MCF 10A (cell line): ENCODE measurements at regions of chr4 and their contacts with region 1.

Region 1: DNA sequence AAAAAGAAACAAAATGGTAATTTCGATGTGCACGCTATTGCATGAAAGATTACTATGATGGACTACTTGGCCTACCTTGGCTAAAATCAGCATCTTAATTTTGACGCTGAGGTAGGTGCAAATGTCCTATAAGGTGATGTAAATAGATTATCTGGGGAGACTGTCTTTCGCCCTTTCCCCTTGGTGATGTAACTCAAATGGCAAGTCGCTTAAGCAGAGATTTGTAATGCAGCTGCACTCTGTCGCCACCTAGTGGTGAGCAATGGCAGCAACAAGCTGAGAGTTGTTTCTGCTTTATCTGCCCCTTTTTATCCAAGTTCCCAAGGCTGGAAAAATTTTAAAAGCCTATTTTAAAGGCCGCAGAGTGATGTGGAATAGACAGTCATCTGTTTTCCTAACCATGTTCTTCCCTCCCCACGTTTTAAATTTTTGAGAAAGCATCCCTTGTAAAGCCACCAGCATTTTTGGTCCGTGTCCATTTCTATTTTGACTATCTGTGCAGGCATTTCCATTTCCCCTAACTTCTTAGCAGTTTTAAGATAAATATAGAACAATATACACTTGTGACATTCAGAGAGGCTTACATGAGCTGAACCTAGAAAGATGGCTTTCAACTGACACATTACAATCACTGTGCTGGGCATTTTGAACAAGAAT is 62.4 kb upstream of the PDLIM3 start:
- DNase-seq: peak; percentile 77
- H3K4me3 Mint-ChIP-seq: no peak overlapping the region
- H3K27ac Mint-ChIP-seq: no peak overlapping the region
- H3K4me1 Mint-ChIP-seq: no peaks in the 10 kb centered on the region
- H3K27me3 Mint-ChIP-seq: no peaks in the 10 kb centered on the region
- CTCF ChIP-seq: peak; percentile 98

Region 2: GRCh38 chr4:185395956-185396723 is 201.5 kb before region 1 on chr4:
- CTCF ChIA-PET with region 1: interaction called, 5 read pairs
- POLR2A ChIA-PET with region 1: interaction called, 7 read pairs
- intact Hi-C with region 1: loop called (anchors 5 kb)
- DNase-seq: peak; percentile 99
- H3K4me3 Mint-ChIP-seq: peak overlapping the region; percentile 88
- H3K27ac Mint-ChIP-seq: peak overlapping the region; percentile 99
- H3K4me1 Mint-ChIP-seq: peaks cover 7% of the 10 kb centered on the region
- H3K27me3 Mint-ChIP-seq: no peaks in the 10 kb centered on the region
- CTCF ChIP-seq: no peak

Region 3: DNA sequence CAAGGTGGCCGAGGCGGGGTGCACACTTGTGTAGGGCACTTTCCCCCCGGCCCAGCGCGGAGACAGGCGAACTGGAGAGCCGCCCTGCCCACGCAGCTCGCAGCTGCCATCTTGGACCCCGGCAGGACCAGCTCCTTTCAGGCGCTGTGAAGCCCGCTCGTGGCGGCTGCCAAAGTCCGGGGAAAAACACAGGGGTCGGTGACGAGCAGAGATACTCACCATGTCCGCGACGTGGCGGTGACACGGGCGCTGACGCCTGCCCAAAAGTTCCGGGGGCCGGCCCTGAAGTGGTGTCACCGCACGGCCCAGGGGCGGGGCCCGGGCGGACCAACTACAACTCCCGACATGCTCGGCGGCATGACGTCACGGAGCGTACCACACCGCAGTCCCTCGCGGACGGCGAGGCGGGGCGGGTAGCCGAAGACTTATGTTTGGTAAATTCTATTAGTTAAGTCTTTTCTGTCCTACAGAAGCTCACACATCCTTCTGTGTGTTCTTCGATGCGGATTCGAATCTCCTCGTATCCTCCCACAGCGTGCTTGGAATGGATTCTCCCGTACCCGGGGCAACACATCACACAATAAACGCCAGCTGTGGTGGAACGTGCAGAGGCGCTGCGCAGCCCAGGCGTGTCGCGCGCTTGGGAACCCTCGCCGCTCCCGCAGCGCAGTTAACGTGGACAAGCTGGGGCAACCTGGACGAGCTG is 171.9 kb before region 1 on chr4 and contains the start of gene UFSP2:
- CTCF ChIA-PET with region 1: interaction called, 24 read pairs
- POLR2A ChIA-PET with region 1: interaction called, 4 read pairs
- intact Hi-C with region 1: loop called (anchors 1 kb)
- DNase-seq: peak; percentile 89
- H3K4me3 Mint-ChIP-seq: peak within 1 kb of the TSS; percentile 84
- H3K27ac Mint-ChIP-seq: peak within 1 kb of the TSS; percentile 100
- H3K4me1 Mint-ChIP-seq: peaks cover 28% of the 10 kb centered on the region
- H3K27me3 Mint-ChIP-seq: no peaks in the 10 kb centered on the region
- CTCF ChIP-seq: no peak
- total RNA-seq, gene UFSP2: 44.4 and 46.4 TPM in 2 replicates

Region 4: GRCh38 chr4:185471235-185472102 is 126.2 kb before region 1 on chr4 and contains the start of gene CCDC110:
- CTCF ChIA-PET with region 1: interaction called, 19 read pairs
- POLR2A ChIA-PET with region 1: interaction called, 3 read pairs
- intact Hi-C with region 1: loop called (anchors 1 kb)
- DNase-seq: peak; percentile 92
- H3K4me3 Mint-ChIP-seq: peak within 1 kb of the TSS; percentile 80
- H3K27ac Mint-ChIP-seq: no peak within 1 kb of the TSS
- H3K4me1 Mint-ChIP-seq: no peaks in the 10 kb centered on the region
- H3K27me3 Mint-ChIP-seq: peaks cover 43% of the 10 kb centered on the region
- CTCF ChIP-seq: peak; percentile 66
- total RNA-seq, gene CCDC110: 0.47 TPM in 1 of 2 replicates, not detected in the other

Region 5: GRCh38 chr4:185582651-185583400 is 14.8 kb before region 1 on chr4:
- CTCF ChIA-PET with region 1: interaction called, 14 read pairs
- POLR2A ChIA-PET with region 1: no interaction called
- intact Hi-C with region 1: no loop called
- DNase-seq: no peak
- H3K4me3 Mint-ChIP-seq: no peak overlapping the region
- H3K27ac Mint-ChIP-seq: no peak overlapping the region
- H3K4me1 Mint-ChIP-seq: no peaks in the 10 kb centered on the region
- H3K27me3 Mint-ChIP-seq: no peaks in the 10 kb centered on the region
- CTCF ChIP-seq: no peak

Region 6: DNA sequence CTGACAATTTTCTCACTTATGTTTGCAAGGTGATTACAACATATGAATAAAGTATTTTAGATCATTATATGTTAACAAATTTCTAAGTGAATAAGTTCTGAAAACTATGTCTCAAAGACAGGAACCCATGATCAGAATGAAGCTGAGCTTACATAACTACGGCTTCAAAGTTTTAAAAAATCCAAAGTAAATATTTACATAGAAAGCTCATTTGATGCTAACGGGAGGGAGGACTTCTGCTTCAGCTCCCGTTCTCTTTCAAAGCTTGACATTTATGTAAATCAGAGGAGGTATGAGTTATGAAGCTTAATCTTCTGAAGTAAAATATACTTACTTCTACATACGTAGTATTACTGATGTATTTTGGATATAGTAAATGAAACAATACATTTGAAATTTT is 10.5 kb after region 1 on chr4:
- CTCF ChIA-PET with region 1: interaction called, 12 read pairs
- POLR2A ChIA-PET with region 1: no interaction called
- intact Hi-C with region 1: no loop called
- DNase-seq: no peak
- H3K4me3 Mint-ChIP-seq: no peak overlapping the region
- H3K27ac Mint-ChIP-seq: no peak overlapping the region
- H3K4me1 Mint-ChIP-seq: no peaks in the 10 kb centered on the region
- H3K27me3 Mint-ChIP-seq: no peaks in the 10 kb centered on the region
- CTCF ChIP-seq: no peak

Region 7: DNA sequence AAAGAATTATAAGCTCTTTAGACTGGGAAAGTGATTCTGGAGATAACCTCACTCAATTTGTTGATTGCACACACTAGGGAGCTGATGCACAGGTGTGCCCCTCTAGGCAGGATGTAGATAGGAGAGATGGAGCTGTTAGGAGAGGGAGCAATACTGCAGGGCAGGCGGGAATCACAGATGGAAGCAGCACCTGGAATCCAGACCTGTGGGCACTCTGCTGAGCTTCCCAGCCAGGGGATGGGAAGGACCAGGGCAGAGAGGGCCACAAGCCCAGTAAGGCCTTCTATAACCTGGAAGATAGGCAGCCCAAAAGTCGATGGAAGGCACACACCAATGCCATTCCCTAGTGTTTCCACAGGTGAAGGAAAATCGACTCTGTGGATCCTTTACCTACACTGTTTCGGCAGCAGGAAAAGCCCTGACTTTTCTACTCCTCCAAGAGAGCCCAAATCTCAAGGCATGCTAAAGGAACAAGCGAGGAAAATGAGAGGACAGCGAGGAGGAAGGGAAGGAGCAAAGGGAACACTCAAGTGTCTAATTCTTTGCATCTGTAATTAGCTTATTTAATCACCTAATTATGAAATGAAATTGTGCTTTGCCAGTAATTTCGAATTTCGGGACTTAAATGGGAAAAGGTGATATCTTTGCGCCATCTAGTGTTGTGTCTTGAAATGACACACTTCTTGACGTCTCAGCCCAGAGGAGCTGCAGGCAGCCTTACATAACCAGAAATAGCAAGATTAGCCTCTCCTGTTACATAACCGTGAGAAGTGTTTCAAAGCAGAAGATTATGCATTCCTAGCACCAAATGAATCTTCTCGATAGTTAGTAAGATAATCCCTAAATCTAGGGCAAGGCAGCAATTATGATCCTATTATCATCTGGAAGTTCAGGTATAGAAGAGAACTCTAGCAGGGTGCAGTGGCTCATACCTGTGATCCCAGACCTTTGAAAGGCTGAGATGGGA is 440.3 kb after region 1 on chr4:
- CTCF ChIA-PET with region 1: interaction called, 13 read pairs
- POLR2A ChIA-PET with region 1: no interaction called
- intact Hi-C with region 1: loop called (anchors 1 kb)
- DNase-seq: peak; percentile 79
- H3K4me3 Mint-ChIP-seq: no peak overlapping the region
- H3K27ac Mint-ChIP-seq: no peak overlapping the region
- H3K4me1 Mint-ChIP-seq: no peaks in the 10 kb centered on the region
- H3K27me3 Mint-ChIP-seq: no peaks in the 10 kb centered on the region
- CTCF ChIP-seq: peak; percentile 75